ENCODE measurements at regions of chr20 and their contacts with region 1.

Region 1: GRCh38 chr20:43187476-43188233 is 2.1 kb downstream of the PTPRT start:
- DNase-seq: peak; percentile 58
- H3K4me3 Mint-ChIP-seq: no peak overlapping the region
- H3K27ac Mint-ChIP-seq: no peak overlapping the region
- H3K4me1 Mint-ChIP-seq: peaks cover 8% of the 10 kb centered on the region
- H3K27me3 Mint-ChIP-seq: peaks cover 24% of the 10 kb centered on the region
- CTCF ChIP-seq: peak; percentile 84

Region 2: DNA sequence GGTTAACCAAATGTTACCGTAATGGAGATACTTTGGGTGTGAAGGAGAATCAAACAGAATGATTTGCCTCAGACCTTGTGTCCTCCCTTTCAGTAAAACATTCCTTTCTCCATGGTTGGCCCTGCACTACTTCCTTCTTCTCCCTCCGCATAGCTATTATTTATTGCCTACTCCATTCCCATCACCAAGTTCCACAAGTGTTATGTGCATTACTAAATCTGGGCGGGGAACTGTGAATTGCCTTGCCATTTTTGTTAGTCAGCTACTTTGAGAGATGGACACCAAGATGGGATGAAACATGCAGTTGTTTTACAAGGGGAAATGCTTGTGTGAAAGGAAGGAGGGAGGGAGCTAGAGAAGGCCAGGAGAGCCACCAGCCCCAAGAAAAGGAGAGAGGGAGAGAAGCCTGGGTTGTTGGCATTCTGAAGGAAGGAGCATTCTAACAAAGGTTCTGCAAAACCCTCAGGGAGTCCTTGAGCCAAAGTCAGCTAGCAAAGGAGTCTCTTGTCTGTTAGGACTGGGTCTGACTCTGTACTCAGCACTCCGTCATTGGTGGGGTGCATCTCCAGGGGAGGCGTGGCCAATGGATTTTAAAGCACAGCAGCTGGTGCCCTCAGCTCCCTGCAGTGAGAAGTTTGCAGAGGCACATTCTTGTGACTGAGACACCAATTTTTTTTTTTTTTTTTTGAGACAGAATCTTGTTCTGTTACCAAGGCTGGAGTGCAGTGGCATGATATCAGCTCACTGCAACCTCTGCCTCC is 1485.9 kb before region 1 on chr20:
- CTCF ChIA-PET with region 1: interaction called, 14 read pairs
- POLR2A ChIA-PET with region 1: no interaction called
- intact Hi-C with region 1: loop called (anchors 1 kb)
- DNase-seq: no peak
- H3K4me3 Mint-ChIP-seq: no peak overlapping the region
- H3K27ac Mint-ChIP-seq: no peak overlapping the region
- H3K4me1 Mint-ChIP-seq: peaks cover 6% of the 10 kb centered on the region
- H3K27me3 Mint-ChIP-seq: peaks cover 10% of the 10 kb centered on the region
- CTCF ChIP-seq: no peak

Region 3: DNA sequence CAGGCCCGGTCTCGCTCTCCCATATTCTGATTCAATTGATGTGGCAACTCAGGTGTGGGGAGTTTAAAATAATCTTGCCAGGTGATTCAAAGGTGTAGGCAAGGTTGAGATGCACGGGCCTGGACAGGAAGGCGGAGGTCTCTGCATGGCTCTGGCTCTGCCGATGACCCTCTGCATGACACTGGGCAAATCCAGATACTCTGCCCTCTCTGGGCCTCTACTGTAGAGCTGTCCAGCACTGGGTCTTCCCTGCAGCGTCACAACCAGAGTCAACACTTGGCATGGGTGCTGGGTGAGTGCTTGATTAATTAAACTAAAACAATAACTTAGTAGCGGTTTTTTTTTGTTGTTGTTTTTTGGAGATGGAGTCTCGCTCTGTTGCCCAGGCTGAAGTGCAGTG is 1464.2 kb before region 1 on chr20:
- CTCF ChIA-PET with region 1: interaction called, 10 read pairs
- POLR2A ChIA-PET with region 1: no interaction called
- intact Hi-C with region 1: no loop called
- DNase-seq: no peak
- H3K4me3 Mint-ChIP-seq: no peak overlapping the region
- H3K27ac Mint-ChIP-seq: no peak overlapping the region
- H3K4me1 Mint-ChIP-seq: no peaks in the 10 kb centered on the region
- H3K27me3 Mint-ChIP-seq: no peaks in the 10 kb centered on the region
- CTCF ChIP-seq: no peak

Region 4: GRCh38 chr20:41738604-41739206 is 1449.0 kb before region 1 on chr20:
- CTCF ChIA-PET with region 1: interaction called, 84 read pairs
- POLR2A ChIA-PET with region 1: no interaction called
- intact Hi-C with region 1: loop called (anchors 1 kb)
- DNase-seq: peak; percentile 56
- H3K4me3 Mint-ChIP-seq: no peak overlapping the region
- H3K27ac Mint-ChIP-seq: no peak overlapping the region
- H3K4me1 Mint-ChIP-seq: no peaks in the 10 kb centered on the region
- H3K27me3 Mint-ChIP-seq: peaks cover 4% of the 10 kb centered on the region
- CTCF ChIP-seq: peak; percentile 81

Region 5: DNA sequence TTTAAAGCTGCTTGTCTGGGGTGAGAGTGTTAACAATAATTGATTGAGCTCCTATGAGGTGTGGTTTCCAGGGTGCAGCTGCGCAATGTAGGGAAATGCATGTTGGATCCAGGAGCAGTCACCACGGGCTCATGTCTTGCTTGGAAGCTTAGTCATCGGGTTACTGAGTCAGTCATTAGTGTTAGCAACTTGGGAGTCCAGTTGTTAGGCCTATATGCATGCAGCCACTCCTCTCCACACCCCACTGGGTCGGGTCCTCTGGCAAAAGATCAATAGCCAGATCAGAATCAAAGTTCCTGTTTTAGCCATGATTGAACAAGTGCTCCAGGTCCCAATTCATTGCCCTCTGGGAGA is 1297.8 kb before region 1 on chr20:
- CTCF ChIA-PET with region 1: interaction called, 7 read pairs
- POLR2A ChIA-PET with region 1: no interaction called
- intact Hi-C with region 1: loop called (anchors 10 kb)
- DNase-seq: no peak
- H3K4me3 Mint-ChIP-seq: no peak overlapping the region
- H3K27ac Mint-ChIP-seq: no peak overlapping the region
- H3K4me1 Mint-ChIP-seq: no peaks in the 10 kb centered on the region
- H3K27me3 Mint-ChIP-seq: no peaks in the 10 kb centered on the region
- CTCF ChIP-seq: no peak

Region 6: DNA sequence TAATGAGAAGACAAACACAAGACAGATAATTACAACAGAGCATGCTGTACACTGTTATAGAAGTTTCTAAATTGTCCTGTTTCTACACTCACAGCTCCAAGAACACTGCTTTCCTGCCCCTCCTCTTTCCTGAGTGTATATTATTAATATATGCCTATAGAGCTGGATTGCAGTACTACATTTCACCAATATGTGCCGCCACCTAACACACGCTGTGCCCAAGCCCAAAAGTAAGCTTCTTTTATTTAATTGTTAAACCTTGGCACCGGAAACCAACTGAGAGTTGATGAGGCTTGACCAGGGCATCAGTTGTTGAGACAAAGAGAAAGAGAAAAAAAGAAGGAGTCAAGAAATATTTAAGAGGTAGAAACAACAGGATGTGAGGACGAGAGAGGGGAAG is 18.0 kb after region 1 on chr20:
- CTCF ChIA-PET with region 1: interaction called, 18 read pairs
- POLR2A ChIA-PET with region 1: no interaction called
- intact Hi-C with region 1: no loop called
- DNase-seq: no peak
- H3K4me3 Mint-ChIP-seq: no peak overlapping the region
- H3K27ac Mint-ChIP-seq: no peak overlapping the region
- H3K4me1 Mint-ChIP-seq: no peaks in the 10 kb centered on the region
- H3K27me3 Mint-ChIP-seq: no peaks in the 10 kb centered on the region
- CTCF ChIP-seq: no peak

Region 7: DNA sequence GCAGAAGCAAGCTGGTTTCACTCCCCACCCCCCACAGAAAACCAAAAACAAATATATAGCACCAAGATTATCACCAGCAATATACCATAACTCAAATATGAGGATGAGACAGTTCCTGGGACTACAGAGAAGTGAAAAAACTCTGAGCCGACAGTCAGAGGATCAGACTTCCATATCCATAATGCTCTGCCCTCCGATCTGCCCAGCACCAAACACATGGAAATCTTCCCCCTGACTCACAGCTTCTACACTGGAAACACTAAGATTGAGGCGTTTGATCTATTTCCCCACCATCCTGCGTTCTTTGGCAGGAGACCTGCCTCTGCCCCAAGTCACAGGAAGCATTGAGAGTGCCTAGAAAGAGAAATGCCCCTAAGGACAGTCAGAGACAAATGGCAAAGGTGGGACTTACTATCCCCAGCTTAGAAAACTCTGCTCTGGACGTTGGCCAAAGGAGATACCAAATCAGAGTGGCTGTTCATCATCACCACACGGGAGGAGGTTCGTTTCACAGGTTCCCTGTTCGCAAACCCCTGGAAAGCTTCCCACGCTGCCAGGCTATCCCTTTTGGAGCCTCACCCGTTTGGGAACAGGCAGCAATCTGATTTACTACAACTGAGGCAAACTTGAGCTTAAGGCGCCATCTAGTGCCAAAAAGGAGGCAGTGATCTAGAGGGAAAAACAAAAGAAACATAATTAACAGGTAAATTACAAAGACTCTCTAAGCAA is 221.4 kb after region 1 on chr20:
- CTCF ChIA-PET with region 1: interaction called, 7 read pairs
- POLR2A ChIA-PET with region 1: no interaction called
- intact Hi-C with region 1: loop called (anchors 5 kb)
- DNase-seq: peak; percentile 53
- H3K4me3 Mint-ChIP-seq: no peak overlapping the region
- H3K27ac Mint-ChIP-seq: no peak overlapping the region
- H3K4me1 Mint-ChIP-seq: peaks cover 7% of the 10 kb centered on the region
- H3K27me3 Mint-ChIP-seq: peaks cover 38% of the 10 kb centered on the region
- CTCF ChIP-seq: peak; percentile 65

Measured in MCF 10A (cell line).